ENCODE measurements at regions of chr1 and their contacts with region 1.

Region 1: GRCh38 chr1:7752512-7753417 is 18.3 kb upstream of the VAMP3 start:
- DNase-seq: peak; percentile 59
- ATAC-seq: no peak
- H3K4me3 Mint-ChIP-seq: peak overlapping the region; percentile 23
- H3K27ac Mint-ChIP-seq: no peak overlapping the region
- H3K4me1 Mint-ChIP-seq: peaks cover 30% of the 10 kb centered on the region
- H3K27me3 Mint-ChIP-seq: peaks cover 4% of the 10 kb centered on the region

Region 2: DNA sequence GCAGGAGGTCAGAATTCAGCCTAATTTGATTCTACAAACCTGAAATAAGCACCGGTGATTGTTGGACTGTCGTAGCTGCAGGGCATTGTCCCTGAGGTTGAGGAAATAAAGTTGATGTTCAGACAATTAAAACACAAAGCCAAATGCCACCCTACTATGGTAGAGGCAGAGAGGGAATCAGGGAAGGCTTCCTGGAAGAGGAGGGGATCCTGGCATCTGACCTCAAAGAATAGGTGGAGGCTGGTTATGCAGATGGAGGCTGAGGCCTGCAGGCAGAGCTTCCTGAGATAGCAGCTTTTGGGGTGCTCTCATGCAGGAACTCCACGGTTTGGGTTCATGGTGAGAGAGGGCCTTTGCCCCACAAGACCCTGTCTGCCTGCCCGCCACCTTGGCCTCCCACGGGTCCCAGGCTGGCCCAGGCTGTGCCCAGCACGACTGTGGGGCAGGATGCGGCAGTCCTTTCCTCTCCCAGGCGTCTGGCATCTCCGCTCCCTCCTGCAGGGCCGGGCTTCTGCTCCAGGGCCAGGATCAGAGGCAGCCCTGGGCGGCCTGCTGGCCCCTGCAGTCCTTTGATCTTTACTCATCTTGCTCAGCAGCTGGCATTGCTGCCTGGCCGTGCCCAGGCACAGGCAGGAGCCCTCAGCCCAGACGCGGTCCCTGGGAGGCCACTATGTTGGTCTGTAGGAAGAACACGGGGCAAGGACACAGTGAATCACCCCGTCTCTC is 115.8 kb before region 1 on chr1:
- CTCF ChIA-PET with region 1: no interaction called
- POLR2A ChIA-PET with region 1: no interaction called
- DNase-seq: no peak
- ATAC-seq: no peak
- H3K4me3 Mint-ChIP-seq: no peak overlapping the region
- H3K27ac Mint-ChIP-seq: no peak overlapping the region
- H3K4me1 Mint-ChIP-seq: no peaks in the 10 kb centered on the region
- H3K27me3 Mint-ChIP-seq: no peaks in the 10 kb centered on the region

Region 3: GRCh38 chr1:7680207-7680954 is 72.4 kb before region 1 on chr1:
- CTCF ChIA-PET with region 1: interaction called, 515 read pairs
- POLR2A ChIA-PET with region 1: no interaction called
- DNase-seq: no peak
- ATAC-seq: peak; percentile 58
- H3K4me3 Mint-ChIP-seq: peak overlapping the region; percentile 63
- H3K27ac Mint-ChIP-seq: no peak overlapping the region
- H3K4me1 Mint-ChIP-seq: no peaks in the 10 kb centered on the region
- H3K27me3 Mint-ChIP-seq: peaks cover 9% of the 10 kb centered on the region

Region 4: GRCh38 chr1:7704214-7705047 is 48.3 kb before region 1 on chr1:
- CTCF ChIA-PET with region 1: interaction called, 21 read pairs
- POLR2A ChIA-PET with region 1: no interaction called
- DNase-seq: peak; percentile 89
- ATAC-seq: peak; percentile 97
- H3K4me3 Mint-ChIP-seq: no peak overlapping the region
- H3K27ac Mint-ChIP-seq: no peak overlapping the region
- H3K4me1 Mint-ChIP-seq: peaks cover 11% of the 10 kb centered on the region
- H3K27me3 Mint-ChIP-seq: peaks cover 66% of the 10 kb centered on the region

Region 5: DNA sequence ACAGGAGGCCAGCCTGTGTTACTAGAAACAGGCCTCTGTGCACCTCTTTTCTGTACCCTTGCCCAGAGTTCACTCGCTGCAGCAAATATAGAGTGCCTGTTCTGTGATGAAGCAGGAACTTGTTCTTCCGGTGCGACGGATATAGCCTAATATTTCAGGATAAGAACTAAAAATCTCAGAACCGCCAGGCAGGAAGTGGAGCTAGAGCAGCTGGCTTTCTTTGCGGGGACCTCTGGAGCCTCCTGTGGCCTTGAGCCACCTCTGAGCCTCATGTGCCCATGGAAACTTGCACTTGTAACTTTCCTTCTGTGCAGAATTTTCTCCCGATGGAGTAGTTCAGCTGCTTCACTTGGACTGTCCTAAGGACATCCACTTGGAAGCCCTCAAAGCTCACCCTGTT is 26.1 kb before region 1 on chr1:
- CTCF ChIA-PET with region 1: interaction called, 10 read pairs
- POLR2A ChIA-PET with region 1: no interaction called
- DNase-seq: no peak
- ATAC-seq: no peak
- H3K4me3 Mint-ChIP-seq: no peak overlapping the region
- H3K27ac Mint-ChIP-seq: no peak overlapping the region
- H3K4me1 Mint-ChIP-seq: peaks cover 5% of the 10 kb centered on the region
- H3K27me3 Mint-ChIP-seq: peaks cover 11% of the 10 kb centered on the region

Region 6: GRCh38 chr1:7768583-7768982 is 15.8 kb after region 1 on chr1:
- CTCF ChIA-PET with region 1: interaction called, 115 read pairs
- POLR2A ChIA-PET with region 1: no interaction called
- DNase-seq: no peak
- ATAC-seq: no peak
- H3K4me3 Mint-ChIP-seq: no peak overlapping the region
- H3K27ac Mint-ChIP-seq: no peak overlapping the region
- H3K4me1 Mint-ChIP-seq: peaks cover 20% of the 10 kb centered on the region
- H3K27me3 Mint-ChIP-seq: peaks cover 31% of the 10 kb centered on the region

Region 7: DNA sequence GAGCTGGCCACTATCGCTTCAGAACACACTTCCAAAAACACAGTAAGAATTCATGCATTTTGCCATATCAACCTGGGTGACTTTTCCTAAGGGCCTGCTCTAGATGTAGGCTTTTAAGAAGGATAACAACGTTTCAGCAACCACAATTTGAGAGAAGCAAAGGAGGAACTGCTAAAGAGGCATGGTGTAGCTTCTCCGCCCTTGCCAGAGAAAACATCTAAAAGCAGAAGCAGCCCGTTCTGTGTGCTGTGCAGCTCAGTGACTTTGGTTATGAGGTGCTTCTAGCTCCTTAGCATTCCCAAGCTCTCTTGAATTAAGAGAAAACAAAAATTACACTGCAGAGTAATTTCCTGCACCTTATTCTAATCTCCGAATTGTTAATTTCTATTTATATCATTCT is 34.0 kb after region 1 on chr1:
- CTCF ChIA-PET with region 1: interaction called, 10 read pairs
- POLR2A ChIA-PET with region 1: interaction called, 3 read pairs
- DNase-seq: no peak
- ATAC-seq: no peak
- H3K4me3 Mint-ChIP-seq: no peak overlapping the region
- H3K27ac Mint-ChIP-seq: no peak overlapping the region
- H3K4me1 Mint-ChIP-seq: peaks cover 18% of the 10 kb centered on the region
- H3K27me3 Mint-ChIP-seq: peaks cover 7% of the 10 kb centered on the region

Measured in activated CD8-positive, alpha-beta T cell treated with anti-CD3 and anti-CD28 coated beads, Interleukin-2, amount 10 ng/mL, durations not matched to agents 7 days and 5 days (primary cell).